Activated naive CD4-positive, alpha-beta T cell treated with anti-CD3 and anti-CD28 coated beads for 36 hours (primary cell): ENCODE measurements at regions of chr5 and their contacts with region 1.

Region 1: DNA sequence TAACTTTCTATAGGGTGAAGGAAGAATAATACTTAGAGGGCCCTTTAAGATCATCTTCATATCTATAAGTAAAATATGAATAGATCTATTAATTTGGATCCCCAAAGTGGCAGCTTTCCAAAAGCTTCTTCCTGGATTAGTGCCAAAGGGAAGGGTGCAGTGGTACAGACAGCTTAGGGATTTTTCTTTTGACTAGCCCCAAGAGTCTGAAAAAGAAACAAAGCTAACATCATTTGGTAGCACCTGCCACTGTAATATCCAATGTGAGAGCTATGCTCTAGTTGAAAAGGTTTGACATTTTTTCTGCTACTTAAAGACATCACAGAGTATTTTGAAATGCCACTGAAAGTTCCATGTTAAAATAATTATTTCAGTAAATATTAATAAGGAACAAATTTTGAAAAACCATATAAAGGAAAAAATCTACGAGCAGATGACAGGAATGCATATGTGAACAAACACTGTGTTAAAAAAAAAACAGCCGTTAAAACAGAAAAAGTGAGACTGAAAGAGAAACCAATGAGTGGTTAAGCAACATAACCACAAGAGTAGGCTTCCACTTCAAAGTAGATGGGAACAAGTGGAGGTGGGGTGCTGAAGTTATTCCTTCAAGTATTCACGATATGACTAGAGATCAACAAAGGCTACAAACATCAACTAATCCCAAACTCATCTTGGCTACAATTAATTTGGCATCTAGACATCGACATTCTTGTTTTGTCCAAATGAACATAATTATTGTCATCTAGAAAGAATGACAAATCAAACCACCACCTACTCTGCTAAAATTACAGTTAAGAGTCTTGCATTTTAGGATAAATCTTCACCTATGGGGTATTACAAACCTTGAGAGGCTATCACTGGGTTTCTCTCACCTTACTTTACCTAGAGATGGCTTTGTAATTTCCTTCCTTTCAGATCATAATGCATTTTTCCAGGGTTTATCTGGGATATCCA is 137.5 kb downstream of the CPLANE1 start:
- DNase-seq: peak; percentile 25
- H3K4me3 Mint-ChIP-seq: peak overlapping the region; percentile 8
- H3K27ac Mint-ChIP-seq: peak overlapping the region; percentile 37
- H3K4me1 Mint-ChIP-seq: peaks cover 37% of the 10 kb centered on the region
- H3K27me3 Mint-ChIP-seq: peaks cover 13% of the 10 kb centered on the region

Region 2: GRCh38 chr5:36728697-36729543 is 382.8 kb before region 1 on chr5:
- CTCF ChIA-PET with region 1: no interaction called
- intact Hi-C with region 1: loop called (anchors 5 kb)
- DNase-seq: peak; percentile 26
- H3K4me3 Mint-ChIP-seq: no peak overlapping the region
- H3K27ac Mint-ChIP-seq: no peak overlapping the region
- H3K4me1 Mint-ChIP-seq: peaks cover 9% of the 10 kb centered on the region
- H3K27me3 Mint-ChIP-seq: peaks cover 2% of the 10 kb centered on the region

Region 3: GRCh38 chr5:37197340-37198050 is 85.8 kb after region 1 on chr5:
- CTCF ChIA-PET with region 1: no interaction called
- intact Hi-C with region 1: loop called (anchors 2 kb)
- DNase-seq: no peak
- H3K4me3 Mint-ChIP-seq: peak overlapping the region; percentile 52
- H3K27ac Mint-ChIP-seq: peak overlapping the region; percentile 20
- H3K4me1 Mint-ChIP-seq: peaks cover 15% of the 10 kb centered on the region
- H3K27me3 Mint-ChIP-seq: no peaks in the 10 kb centered on the region

Region 4: DNA sequence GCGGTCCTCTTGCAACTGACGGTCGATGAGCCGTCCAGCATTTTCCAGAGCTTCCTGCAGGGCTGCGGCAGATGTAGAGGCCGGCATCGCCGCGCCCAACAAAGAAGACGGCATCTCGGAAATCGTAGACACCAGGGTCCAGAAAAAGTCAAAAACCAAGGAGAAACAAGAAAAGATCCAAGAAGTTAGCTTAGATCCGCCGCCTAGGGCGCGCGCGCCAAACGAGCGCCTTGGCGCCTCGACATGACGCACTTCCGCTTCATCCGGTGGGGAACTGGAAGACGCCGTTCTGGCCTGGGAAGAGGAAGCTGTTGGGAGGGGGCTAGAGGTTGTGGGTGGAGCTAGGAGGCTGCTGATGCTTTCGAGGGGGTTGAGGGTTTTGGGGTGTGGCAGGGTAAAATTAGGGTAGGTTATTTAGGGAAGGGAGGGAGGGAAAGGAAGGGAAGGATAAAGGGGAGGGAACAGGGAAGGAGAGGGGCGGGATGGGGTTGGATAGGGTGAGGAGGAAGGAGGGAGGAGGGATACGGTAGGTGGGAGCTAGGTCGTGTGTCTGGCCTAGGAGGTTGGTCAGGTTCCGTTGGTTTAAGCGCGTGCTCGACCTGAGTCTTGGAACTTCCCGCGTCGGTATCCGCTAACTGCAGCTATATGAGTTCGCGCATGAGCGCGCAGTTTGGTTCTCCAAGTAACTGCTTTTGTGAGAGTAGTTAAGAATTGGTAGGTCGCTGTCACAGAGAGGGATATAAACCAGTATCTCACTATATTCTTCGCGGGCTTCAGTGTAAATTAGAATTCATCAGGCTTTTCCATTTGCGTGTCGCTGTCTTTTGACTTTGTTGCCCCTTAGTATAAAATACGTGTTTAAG is 259.4 kb after region 1 on chr5 and contains the start of gene NUP155:
- CTCF ChIA-PET with region 1: no interaction called
- intact Hi-C with region 1: loop called (anchors 2 kb)
- DNase-seq: peak; percentile 94
- H3K4me3 Mint-ChIP-seq: peak within 1 kb of the TSS; percentile 99
- H3K27ac Mint-ChIP-seq: peak within 1 kb of the TSS; percentile 96
- H3K4me1 Mint-ChIP-seq: peaks cover 37% of the 10 kb centered on the region
- H3K27me3 Mint-ChIP-seq: no peaks in the 10 kb centered on the region
- total RNA-seq, gene NUP155: 79.2 to 87.8 TPM

Region 5: DNA sequence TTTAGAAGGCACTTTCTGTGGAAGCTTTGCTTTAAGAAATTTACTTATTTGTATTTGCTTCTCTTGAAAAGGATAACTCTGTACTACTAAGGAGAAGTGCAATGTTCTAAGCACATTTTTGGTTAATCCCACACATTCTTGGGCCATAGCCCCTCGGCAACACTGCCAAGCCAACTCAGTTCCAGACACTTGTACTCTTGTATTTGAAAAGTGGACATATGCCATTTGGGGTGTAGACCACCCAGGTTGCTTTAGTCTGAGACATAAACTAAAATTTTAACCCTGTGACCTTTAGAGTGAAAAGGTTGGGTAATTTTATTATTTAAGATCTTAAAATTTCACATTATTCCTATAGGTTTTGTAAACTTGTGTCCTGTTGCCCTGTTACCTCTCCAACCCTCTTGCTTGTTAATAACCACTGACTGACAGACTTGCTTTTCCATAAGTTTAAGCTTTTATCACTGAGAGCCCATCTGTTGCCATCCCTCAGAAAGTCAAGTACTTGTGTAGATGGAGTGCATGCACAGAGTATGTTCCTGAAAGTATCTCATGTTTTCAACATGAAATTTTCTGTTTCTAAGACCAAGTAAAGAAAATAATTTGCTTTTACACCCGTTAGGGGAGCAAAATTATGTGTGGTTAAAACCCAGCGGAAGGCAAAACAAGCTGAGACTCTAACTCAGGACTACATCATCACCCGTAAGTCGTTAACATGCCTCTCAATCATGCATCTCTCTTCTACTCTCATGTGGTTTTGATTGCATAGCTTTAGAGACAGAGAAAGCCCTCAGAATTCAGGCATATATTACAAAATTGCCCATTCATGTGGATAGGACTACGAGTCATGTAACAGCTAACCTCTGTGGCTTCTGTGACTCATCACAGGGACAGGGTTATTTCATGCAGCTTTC is 610.8 kb after region 1 on chr5:
- CTCF ChIA-PET with region 1: no interaction called
- intact Hi-C with region 1: loop called (anchors 1 kb)
- DNase-seq: peak; percentile 68
- H3K4me3 Mint-ChIP-seq: no peak overlapping the region
- H3K27ac Mint-ChIP-seq: peak overlapping the region; percentile 50
- H3K4me1 Mint-ChIP-seq: peaks cover 26% of the 10 kb centered on the region
- H3K27me3 Mint-ChIP-seq: no peaks in the 10 kb centered on the region